PC-9 (cell line): ENCODE measurements at regions of chr20 and their contacts with region 1.

Region 1: GRCh38 chr20:17479063-17479657 is 52.0 kb downstream of the BFSP1 start:
- DNase-seq: no peak
- H3K4me3 ChIP-seq: no peak overlapping the region
- H3K27ac ChIP-seq: no peak overlapping the region
- H3K4me1 ChIP-seq: no peaks in the 10 kb centered on the region
- H3K27me3 ChIP-seq: peaks cover 63% of the 10 kb centered on the region
- CTCF ChIP-seq: no peak

Region 2: GRCh38 chr20:17497821-17498580 is 18.8 kb after region 1 on chr20:
- CTCF ChIA-PET with region 1: no interaction called
- POLR2A ChIA-PET with region 1: no interaction called
- intact Hi-C with region 1: no loop called
- DNase-seq: no peak
- H3K4me3 ChIP-seq: no peak overlapping the region
- H3K27ac ChIP-seq: no peak overlapping the region
- H3K4me1 ChIP-seq: peaks cover 8% of the 10 kb centered on the region
- H3K27me3 ChIP-seq: peaks cover 7% of the 10 kb centered on the region
- CTCF ChIP-seq: no peak

Region 3: GRCh38 chr20:17698384-17698783 is 219.2 kb after region 1 on chr20:
- CTCF ChIA-PET with region 1: interaction called, 17 read pairs
- POLR2A ChIA-PET with region 1: no interaction called
- intact Hi-C with region 1: no loop called
- DNase-seq: no peak
- H3K4me3 ChIP-seq: no peak overlapping the region
- H3K27ac ChIP-seq: no peak overlapping the region
- H3K4me1 ChIP-seq: no peaks in the 10 kb centered on the region
- H3K27me3 ChIP-seq: no peaks in the 10 kb centered on the region
- CTCF ChIP-seq: no peak